OCI-LY7 (cell line): ENCODE measurements at regions of chr11 and their contacts with region 1.

Region 1: GRCh38 chr11:47020793-47021526 is 84.4 kb downstream of the CSTPP1 start:
- DNase-seq: no peak
- H3K4me3 ChIP-seq: no peak overlapping the region
- H3K27ac ChIP-seq: no peak overlapping the region
- H3K4me1 ChIP-seq: peaks cover 27% of the 10 kb centered on the region
- CTCF ChIP-seq: no peak

Region 2: GRCh38 chr11:47010179-47010578 is 10.8 kb before region 1 on chr11:
- CTCF ChIA-PET with region 1: no interaction called
- POLR2A ChIA-PET with region 1: interaction called, 13 read pairs
- intact Hi-C with region 1: no loop called
- DNase-seq: no peak
- H3K4me3 ChIP-seq: no peak overlapping the region
- H3K27ac ChIP-seq: no peak overlapping the region
- H3K4me1 ChIP-seq: peaks cover 64% of the 10 kb centered on the region
- CTCF ChIP-seq: no peak